Psoas muscle (tissue), 8 donors: ENCODE measurements at regions of chr5 and their contacts with region 1.

Region 1: GRCh38 chr5:139684881-139685749 is 37.0 kb downstream of the CXXC5 start:
- DNase-seq: peak; percentile 71 to 91
- ATAC-seq: peak; percentile 81 to 84 (median 82)
- H3K4me3 ChIP-seq: peak overlapping the region; percentile 22
- H3K27ac ChIP-seq: peak overlapping the region; percentile 94
- H3K4me1 ChIP-seq: peaks cover 82% of the 10 kb centered on the region
- H3K27me3 ChIP-seq: no peaks in the 10 kb centered on the region
- CTCF ChIP-seq: peak; percentile 35

Region 2: GRCh38 chr5:139014726-139015125 is 670.4 kb before region 1 on chr5:
- intact Hi-C with region 1: no loop called
- DNase-seq: no peak
- ATAC-seq: no peak
- H3K4me3 ChIP-seq: no peak overlapping the region
- H3K27ac ChIP-seq: no peak overlapping the region
- H3K4me1 ChIP-seq: no peaks in the 10 kb centered on the region
- H3K27me3 ChIP-seq: no peaks in the 10 kb centered on the region
- CTCF ChIP-seq: no peak

Region 3: DNA sequence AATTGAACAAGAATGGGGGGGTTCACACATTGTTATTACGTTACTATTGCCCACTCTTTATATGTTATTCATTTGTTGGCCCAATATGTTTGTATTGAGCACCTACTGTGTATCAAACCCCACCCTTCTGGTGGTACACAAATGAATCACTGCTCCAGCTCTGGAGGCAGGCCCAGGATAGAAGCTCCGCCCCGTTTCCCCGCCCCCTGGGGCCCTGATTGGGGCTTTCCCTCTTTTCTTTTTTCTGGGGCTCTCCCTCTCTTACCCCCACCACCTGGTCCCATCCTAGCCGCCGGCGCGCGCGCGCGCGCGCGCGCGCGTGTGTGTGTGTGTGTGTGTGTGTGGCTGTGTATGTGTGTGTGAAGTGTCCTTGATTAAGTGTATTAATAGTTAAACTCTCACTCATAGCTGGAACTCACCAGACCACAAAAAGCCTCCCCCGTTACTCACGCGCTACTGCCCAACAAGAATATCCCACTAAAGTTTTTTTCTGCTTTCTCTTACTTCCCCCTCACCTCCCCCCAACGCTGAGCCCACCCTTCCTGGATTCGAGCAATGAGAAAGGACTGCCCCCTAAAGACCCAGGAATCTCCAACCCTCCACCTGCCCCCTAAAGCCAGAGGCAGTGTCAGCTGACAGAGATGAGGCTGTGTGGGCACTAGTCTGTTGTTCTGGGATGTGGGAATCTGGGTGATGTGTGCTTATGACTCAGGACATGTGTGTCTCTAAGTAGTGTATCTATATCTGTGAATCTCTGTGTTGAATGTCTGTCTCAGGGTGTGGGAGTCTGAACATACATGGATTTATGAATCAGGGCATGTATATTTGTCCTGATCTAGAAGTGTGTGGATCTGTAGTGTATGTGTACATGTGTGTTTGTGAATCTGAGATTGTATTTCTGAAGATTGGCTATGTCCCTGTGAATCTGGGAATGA is 33.0 kb before region 1 on chr5:
- intact Hi-C with region 1: loop called in 1 of 2 experiments (anchors 5 kb)
- DNase-seq: peak; percentile 84 to 91
- ATAC-seq: peak; percentile 43 to 59 (median 50)
- H3K4me3 ChIP-seq: peak overlapping the region; percentile 99
- H3K27ac ChIP-seq: peak overlapping the region; percentile 98
- H3K4me1 ChIP-seq: peaks cover 60% of the 10 kb centered on the region
- H3K27me3 ChIP-seq: no peaks in the 10 kb centered on the region
- CTCF ChIP-seq: no peak

Region 4: DNA sequence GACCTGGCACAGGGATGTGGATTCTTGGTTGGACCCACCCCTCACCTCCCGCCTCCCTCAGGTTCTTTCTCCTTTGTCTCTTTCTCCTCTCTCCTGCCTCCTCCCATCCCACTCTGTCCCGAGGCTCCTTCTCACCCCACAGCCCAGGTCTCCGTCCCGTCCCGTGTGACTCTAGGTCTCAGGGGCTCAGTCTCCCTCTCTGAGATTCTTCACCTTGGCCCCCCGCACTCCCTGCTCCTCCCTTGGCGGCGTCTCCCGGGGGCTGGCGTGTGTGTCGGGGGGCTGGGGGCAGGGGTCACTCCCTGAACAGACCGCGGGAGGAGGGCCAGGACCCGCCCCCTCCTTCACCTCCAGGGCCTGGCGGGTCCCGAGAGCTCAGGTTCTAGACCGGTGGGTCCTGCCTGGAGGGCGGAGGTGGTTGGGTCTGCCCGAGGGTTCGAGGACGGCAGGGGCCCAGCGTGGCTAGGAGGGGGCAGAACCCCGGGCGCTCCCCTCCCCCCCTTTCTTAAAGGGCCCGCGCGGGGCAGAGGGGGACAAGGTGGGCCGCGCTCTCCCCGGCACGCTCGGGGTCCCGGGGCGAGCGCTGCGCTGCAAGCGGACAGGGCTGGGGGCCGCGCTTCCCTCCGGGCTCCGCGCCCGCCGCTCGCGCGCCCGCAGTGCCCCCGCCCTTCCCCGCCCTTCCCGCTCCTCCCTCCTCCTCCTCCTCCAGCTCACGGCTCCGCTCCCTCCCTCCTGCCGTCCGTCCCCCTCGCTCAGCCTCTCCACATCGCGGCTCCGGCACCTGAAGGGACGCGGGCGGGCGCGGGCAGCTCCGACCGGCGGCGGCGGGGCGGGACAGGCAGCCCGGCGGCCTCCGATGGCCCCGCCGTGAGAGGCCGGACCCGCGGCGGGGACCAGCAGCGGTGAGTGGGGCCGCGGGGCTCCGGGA is 110.2 kb after region 1 on chr5 and contains the start of gene PSD2:
- intact Hi-C with region 1: no loop called
- DNase-seq: peak in 1 of 2 donors; percentile 60
- ATAC-seq: peak; percentile 40 to 66 (median 54)
- H3K4me3 ChIP-seq: peak within 1 kb of the TSS; percentile 68
- H3K27ac ChIP-seq: no peak within 1 kb of the TSS
- H3K4me1 ChIP-seq: peaks cover 10% of the 10 kb centered on the region
- H3K27me3 ChIP-seq: peaks cover 0 to 33% (median 17%) of the 10 kb centered on the region in 3 donors
- CTCF ChIP-seq: no peak
- total RNA-seq, gene PSD2: 0.04 to 0.37 TPM in 2 of 4 donors, not detected in the others